ENCODE measurements at regions of chr2 and their contacts with region 1.

Region 1: DNA sequence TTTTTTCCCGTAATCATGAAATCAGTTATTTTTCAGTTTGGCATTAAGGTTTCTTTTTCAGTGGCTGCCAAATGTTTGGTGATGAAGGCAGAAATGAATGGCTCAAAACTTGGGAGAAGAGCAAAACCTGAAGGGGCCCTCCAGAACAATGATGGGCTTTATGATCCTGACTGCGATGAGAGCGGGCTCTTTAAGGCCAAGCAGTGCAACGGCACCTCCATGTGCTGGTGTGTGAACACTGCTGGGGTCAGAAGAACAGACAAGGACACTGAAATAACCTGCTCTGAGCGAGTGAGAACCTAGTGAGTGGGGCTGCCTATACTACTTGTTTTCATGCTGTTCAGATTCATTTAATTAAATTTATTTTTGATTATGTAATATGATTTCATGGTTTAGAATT is 29.2 kb upstream of the MSH2 start:
- DNase-seq: peak; percentile 83
- ATAC-seq: peak; percentile 84
- H3K4me3 ChIP-seq: no peak overlapping the region
- H3K27ac ChIP-seq: no peak overlapping the region
- H3K4me1 ChIP-seq: peaks cover 44% of the 10 kb centered on the region
- H3K27me3 ChIP-seq: no peaks in the 10 kb centered on the region
- CTCF ChIP-seq: peak; percentile 94
- EP300 ChIP-seq: no peak
- POLR2A ChIP-seq: no peak
- RAD21 ChIP-seq: peak; percentile 95

Region 2: GRCh38 chr2:47334356-47335136 is 39.2 kb before region 1 on chr2:
- CTCF ChIA-PET with region 1: interaction called, 21 read pairs
- POLR2A ChIA-PET with region 1: interaction called, 7 read pairs
- in situ Hi-C with region 1: no loop called
- intact Hi-C with region 1: loop called (anchors 1 kb)
- DNase-seq: no peak
- ATAC-seq: no peak
- H3K4me3 ChIP-seq: no peak overlapping the region
- H3K27ac ChIP-seq: no peak overlapping the region
- H3K4me1 ChIP-seq: peaks cover 19% of the 10 kb centered on the region
- H3K27me3 ChIP-seq: no peaks in the 10 kb centered on the region
- CTCF ChIP-seq: no peak
- EP300 ChIP-seq: no peak
- POLR2A ChIP-seq: no peak
- RAD21 ChIP-seq: no peak

Region 3: DNA sequence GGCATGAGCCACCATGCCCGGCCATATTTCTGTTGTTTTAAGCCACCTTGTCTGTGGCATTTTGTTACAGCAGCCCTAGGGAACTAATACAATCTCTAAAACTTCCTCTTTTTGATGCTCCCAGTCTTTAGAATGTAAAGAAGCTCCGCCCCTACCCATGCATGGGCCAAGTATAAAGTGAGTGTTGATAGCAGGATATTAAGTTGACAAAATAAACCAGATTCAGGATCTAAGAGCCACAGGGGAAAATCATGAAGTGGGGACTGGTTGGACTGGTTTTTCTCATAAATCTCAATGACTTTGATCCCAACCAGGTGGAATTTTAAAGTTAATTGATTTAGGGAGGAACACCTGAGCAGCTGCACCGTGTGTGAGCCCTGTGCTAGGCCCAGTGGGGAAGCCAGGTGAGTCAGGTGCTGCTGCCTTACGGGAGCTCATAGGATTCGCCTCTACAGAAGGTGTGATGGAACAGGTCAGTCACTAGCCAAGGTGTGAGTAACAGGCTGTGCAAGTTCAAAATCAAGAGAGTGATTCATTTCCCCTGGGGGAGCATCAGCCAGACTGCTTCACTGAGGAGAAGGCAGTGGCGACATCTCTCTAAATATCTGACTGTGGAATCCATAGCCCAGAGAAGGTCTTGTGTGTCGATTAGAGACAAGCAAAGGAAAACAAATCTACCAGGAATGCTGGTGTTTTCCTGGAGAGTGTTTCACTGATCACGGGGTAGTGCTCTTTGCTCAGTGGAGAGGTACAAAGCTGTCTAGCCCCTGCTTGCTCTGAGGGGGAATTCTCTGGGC is 33.8 kb before region 1 on chr2:
- CTCF ChIA-PET with region 1: interaction called, 21 read pairs
- POLR2A ChIA-PET with region 1: interaction called, 7 read pairs
- in situ Hi-C with region 1: no loop called
- intact Hi-C with region 1: loop called (anchors 1 kb)
- DNase-seq: peak; percentile 58
- ATAC-seq: no peak
- H3K4me3 ChIP-seq: no peak overlapping the region
- H3K27ac ChIP-seq: peak overlapping the region; percentile 28
- H3K4me1 ChIP-seq: peaks cover 60% of the 10 kb centered on the region
- H3K27me3 ChIP-seq: no peaks in the 10 kb centered on the region
- CTCF ChIP-seq: no peak
- EP300 ChIP-seq: no peak
- POLR2A ChIP-seq: no peak
- RAD21 ChIP-seq: no peak

Region 4: DNA sequence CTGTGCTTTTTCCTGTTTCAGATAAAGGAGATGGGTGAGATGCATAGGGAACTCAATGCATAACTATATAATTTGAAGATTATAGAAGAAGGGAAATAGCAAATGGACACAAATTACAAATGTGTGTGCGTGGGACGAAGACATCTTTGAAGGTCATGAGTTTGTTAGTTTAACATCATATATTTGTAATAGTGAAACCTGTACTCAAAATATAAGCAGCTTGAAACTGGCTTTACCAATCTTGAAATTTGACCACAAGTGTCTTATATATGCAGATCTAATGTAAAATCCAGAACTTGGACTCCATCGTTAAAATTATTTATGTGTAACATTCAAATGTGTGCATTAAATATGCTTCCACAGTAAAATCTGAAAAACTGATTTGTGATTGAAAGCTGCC is 12.8 kb after region 1 on chr2:
- CTCF ChIA-PET with region 1: no interaction called
- POLR2A ChIA-PET with region 1: interaction called, 4 read pairs
- in situ Hi-C with region 1: no loop called
- intact Hi-C with region 1: loop called (anchors 1 kb)
- DNase-seq: no peak
- ATAC-seq: no peak
- H3K4me3 ChIP-seq: no peak overlapping the region
- H3K27ac ChIP-seq: no peak overlapping the region
- H3K4me1 ChIP-seq: peaks cover 10% of the 10 kb centered on the region
- H3K27me3 ChIP-seq: no peaks in the 10 kb centered on the region
- CTCF ChIP-seq: no peak
- EP300 ChIP-seq: no peak
- POLR2A ChIP-seq: no peak
- RAD21 ChIP-seq: no peak

Region 5: DNA sequence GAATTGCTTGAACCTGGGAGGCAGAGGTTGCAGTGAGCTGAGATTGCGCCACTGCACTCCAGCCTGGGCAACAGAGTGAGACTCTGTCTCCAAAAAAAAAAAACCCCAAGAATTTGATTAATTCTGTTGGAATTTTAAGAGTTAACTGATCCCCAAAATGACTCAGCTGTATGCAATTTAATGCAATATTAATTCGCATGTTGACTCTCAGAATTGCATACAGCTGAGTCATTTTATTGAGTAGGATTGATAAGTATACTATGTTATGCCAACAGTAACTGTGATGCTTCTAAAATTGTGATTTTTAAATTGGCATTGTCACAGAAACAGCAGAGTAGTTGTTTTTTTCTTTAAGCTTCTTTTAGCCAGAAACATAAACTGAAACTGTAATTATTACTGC is 48.8 kb after region 1 on chr2:
- CTCF ChIA-PET with region 1: no interaction called
- POLR2A ChIA-PET with region 1: no interaction called
- in situ Hi-C with region 1: no loop called
- intact Hi-C with region 1: no loop called
- DNase-seq: no peak
- ATAC-seq: no peak
- H3K4me3 ChIP-seq: no peak overlapping the region
- H3K27ac ChIP-seq: no peak overlapping the region
- H3K4me1 ChIP-seq: no peaks in the 10 kb centered on the region
- H3K27me3 ChIP-seq: no peaks in the 10 kb centered on the region
- CTCF ChIP-seq: no peak
- EP300 ChIP-seq: no peak
- POLR2A ChIP-seq: no peak
- RAD21 ChIP-seq: no peak

Measured in HepG2 (cell line).